ENCODE measurements at regions of chr5 and their contacts with region 1.

Region 1: DNA sequence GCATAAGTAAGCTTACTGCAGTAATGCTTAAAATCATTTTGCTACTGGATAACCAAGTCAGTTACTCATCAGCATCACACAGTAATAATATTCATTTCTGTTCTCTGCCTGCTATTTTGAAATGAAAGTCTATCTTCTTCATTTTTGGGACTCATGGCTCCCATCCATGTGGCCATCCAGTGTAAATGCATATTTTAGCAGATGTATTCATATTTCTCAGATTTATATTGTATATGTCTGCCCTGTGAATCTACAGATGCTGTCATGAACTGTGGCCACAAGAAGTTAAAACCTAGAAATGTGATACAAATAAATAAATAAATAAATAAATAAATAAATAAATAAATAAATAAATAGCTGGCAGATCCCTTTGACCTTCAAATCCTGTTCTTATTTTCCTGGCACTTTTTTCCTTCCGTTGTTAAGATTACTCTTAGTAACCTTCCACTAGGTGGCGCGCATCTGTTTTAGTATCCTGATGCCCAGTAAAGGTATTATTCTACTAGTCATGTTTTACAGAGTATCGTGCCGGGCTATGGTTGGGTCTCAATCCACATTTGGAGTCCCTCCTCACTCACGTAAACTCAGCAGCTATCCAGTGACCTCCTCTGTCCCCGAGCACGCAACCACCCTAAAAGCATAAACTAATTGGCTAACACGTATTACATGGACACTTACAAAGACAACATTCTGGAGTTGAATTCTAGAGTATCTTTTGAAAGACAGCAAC is 79.2 kb upstream of the IL7R start:
- DNase-seq: peak; percentile 73
- H3K4me3 Mint-ChIP-seq: peak overlapping the region; percentile 59
- H3K27ac Mint-ChIP-seq: peak overlapping the region; percentile 89
- H3K4me1 Mint-ChIP-seq: peaks cover 79% of the 10 kb centered on the region
- H3K27me3 Mint-ChIP-seq: no peaks in the 10 kb centered on the region

Region 2: DNA sequence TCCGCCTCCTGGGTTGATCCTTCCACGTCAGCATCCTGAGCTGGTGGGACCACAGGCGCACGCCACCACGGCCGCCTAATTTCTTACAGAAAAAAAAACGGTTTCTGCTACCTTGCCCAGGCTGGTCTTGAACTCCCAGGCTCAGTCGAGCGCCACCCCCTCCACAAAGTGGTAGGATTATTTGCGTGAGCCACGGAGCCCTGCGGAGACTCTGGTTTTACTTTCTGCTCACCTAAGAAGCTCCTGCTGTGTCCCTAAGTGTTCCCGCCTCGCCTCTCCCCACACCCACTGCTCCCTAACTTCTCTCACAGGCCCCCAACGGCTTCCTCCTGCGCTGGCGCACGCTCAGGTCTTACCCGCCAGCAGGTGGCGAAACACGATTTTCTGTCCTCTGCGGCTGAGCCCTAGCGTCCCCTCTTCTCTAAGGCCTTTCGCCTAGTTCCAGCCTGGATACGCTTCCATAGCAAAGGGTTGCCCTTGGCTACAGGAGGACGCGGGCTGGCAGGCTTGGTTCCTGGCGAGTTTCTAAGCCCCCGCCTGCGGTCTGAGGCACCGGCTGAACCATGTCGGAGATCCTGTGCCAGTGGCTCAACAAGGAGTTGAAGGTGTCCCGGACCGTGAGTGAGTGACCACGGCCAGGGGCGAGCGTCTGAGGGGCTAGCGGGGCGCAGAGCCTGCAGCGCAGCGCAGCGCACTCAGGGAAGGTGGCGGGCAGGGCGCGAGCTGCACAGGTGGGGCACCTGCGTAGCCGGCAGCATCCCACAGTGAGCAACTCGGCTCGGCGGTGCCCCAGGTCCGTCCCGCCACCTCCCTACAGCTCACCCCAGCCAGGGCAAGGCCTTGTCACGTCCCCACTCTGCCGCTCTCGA is 159.9 kb before region 1 on chr5 and contains the start of gene SPEF2:
- CTCF ChIA-PET with region 1: interaction called, 7 read pairs
- POLR2A ChIA-PET with region 1: no interaction called
- intact Hi-C with region 1: loop called (anchors 2 kb)
- DNase-seq: peak; percentile 89
- H3K4me3 Mint-ChIP-seq: peak within 1 kb of the TSS; percentile 77
- H3K27ac Mint-ChIP-seq: peak within 1 kb of the TSS; percentile 83
- H3K4me1 Mint-ChIP-seq: peaks cover 34% of the 10 kb centered on the region
- H3K27me3 Mint-ChIP-seq: peaks cover 1% of the 10 kb centered on the region
- total RNA-seq, gene SPEF2: 10.6 to 13.0 TPM

Region 3: GRCh38 chr5:35657877-35658276 is 119.6 kb before region 1 on chr5:
- CTCF ChIA-PET with region 1: interaction called, 4 read pairs
- POLR2A ChIA-PET with region 1: no interaction called
- intact Hi-C with region 1: loop called (anchors 2 kb)
- DNase-seq: no peak
- H3K4me3 Mint-ChIP-seq: no peak overlapping the region
- H3K27ac Mint-ChIP-seq: no peak overlapping the region
- H3K4me1 Mint-ChIP-seq: peaks cover 21% of the 10 kb centered on the region
- H3K27me3 Mint-ChIP-seq: no peaks in the 10 kb centered on the region

Region 4: GRCh38 chr5:35736280-35736679 is 41.2 kb before region 1 on chr5:
- CTCF ChIA-PET with region 1: no interaction called
- POLR2A ChIA-PET with region 1: interaction called, 3 read pairs
- intact Hi-C with region 1: loop called (anchors 1 kb)
- DNase-seq: peak; percentile 68
- H3K4me3 Mint-ChIP-seq: no peak overlapping the region
- H3K27ac Mint-ChIP-seq: peak overlapping the region; percentile 77
- H3K4me1 Mint-ChIP-seq: peaks cover 47% of the 10 kb centered on the region
- H3K27me3 Mint-ChIP-seq: no peaks in the 10 kb centered on the region

Region 5: DNA sequence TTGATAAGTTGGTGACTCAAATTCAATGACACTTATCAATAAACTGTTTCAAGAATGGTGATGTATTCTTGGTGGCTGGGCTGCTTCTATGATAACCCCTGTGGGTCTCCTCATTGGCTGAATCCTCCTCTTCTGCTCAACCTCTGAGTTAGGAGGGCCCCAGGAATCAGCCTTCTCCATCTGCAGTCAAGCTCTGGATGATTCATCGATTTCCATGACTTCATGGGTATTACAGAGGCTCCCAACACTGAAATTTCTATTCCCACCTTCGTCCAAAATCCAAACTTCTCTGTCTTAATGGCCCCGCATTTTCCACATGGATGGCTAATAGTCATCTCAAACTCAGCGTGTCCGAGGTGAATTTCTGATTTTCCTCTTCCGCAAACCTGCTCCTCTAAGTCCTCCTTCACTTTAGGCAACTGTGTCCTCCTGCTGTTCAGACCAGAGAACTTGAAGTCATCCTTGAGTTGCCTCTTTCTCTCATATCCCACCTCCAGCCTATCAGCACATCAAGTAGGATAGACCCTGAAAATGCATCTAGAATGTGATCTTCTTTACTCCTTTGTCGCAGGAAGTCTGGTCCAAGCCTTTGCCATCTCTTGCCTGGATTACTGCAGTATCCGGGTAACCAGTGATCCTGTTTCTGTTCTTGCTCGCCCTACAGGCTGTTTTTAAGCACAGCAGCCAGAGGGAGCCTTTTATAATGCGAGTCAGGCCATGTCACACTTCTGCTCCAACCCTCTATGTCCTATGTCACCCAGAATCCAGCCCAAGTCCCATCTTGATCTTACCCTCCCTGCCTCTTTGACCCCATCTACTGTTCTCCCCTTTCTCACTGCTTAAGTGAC is 37.8 kb after region 1 on chr5:
- CTCF ChIA-PET with region 1: interaction called, 59 read pairs
- POLR2A ChIA-PET with region 1: interaction called, 7 read pairs
- intact Hi-C with region 1: loop called (anchors 1 kb)
- DNase-seq: peak; percentile 71
- H3K4me3 Mint-ChIP-seq: no peak overlapping the region
- H3K27ac Mint-ChIP-seq: no peak overlapping the region
- H3K4me1 Mint-ChIP-seq: peaks cover 52% of the 10 kb centered on the region
- H3K27me3 Mint-ChIP-seq: no peaks in the 10 kb centered on the region

Region 6: GRCh38 chr5:35838370-35839042 is 61.0 kb after region 1 on chr5:
- CTCF ChIA-PET with region 1: interaction called, 7 read pairs
- POLR2A ChIA-PET with region 1: interaction called, 3 read pairs
- intact Hi-C with region 1: loop called (anchors 1 kb)
- DNase-seq: peak; percentile 76
- H3K4me3 Mint-ChIP-seq: peak overlapping the region; percentile 50
- H3K27ac Mint-ChIP-seq: peak overlapping the region; percentile 96
- H3K4me1 Mint-ChIP-seq: peaks cover 70% of the 10 kb centered on the region
- H3K27me3 Mint-ChIP-seq: no peaks in the 10 kb centered on the region

Region 7: DNA sequence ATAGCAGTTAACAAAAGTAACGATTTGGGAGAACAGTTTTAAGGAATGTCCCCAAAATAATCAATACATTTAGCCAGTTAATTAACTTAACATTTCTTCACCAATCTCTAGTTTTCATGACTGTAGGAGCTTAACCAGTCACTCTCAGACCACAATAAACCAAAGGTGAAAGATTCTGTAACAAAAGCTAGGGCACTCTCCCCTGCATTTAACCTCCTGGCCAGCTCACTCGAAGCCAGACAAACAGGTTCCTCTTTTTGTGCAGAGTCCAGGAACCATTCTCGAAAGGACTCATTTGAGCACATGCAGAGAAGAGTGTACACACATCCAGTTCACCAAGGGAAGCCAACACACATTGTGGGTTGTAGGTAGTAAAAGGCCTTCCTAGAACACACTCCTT is 85.6 kb after region 1 on chr5:
- CTCF ChIA-PET with region 1: interaction called, 22 read pairs
- POLR2A ChIA-PET with region 1: no interaction called
- intact Hi-C with region 1: no loop called
- DNase-seq: peak; percentile 59
- H3K4me3 Mint-ChIP-seq: peak overlapping the region; percentile 78
- H3K27ac Mint-ChIP-seq: peak overlapping the region; percentile 95
- H3K4me1 Mint-ChIP-seq: peaks cover 78% of the 10 kb centered on the region
- H3K27me3 Mint-ChIP-seq: no peaks in the 10 kb centered on the region

Measured in activated CD4-positive, alpha-beta memory T cell treated with anti-CD3 and anti-CD28 coated beads for 36 hours (primary cell).